Calu3 (cell line): ENCODE measurements at regions of chr7 and their contacts with region 1.

Region 1: GRCh38 chr7:7761340-7761980 is 43.1 kb upstream of the RPA3 start:
- DNase-seq: no peak
- H3K4me3 Mint-ChIP-seq: peak overlapping the region; percentile 66
- H3K27ac Mint-ChIP-seq: peak overlapping the region; percentile 5
- H3K4me1 Mint-ChIP-seq: peaks cover 39% of the 10 kb centered on the region
- H3K27me3 Mint-ChIP-seq: no peaks in the 10 kb centered on the region
- CTCF ChIP-seq: no peak

Region 2: GRCh38 chr7:7595451-7595850 is 166.0 kb before region 1 on chr7:
- CTCF ChIA-PET with region 1: no interaction called
- intact Hi-C with region 1: loop called (anchors 5 kb)
- DNase-seq: no peak
- H3K4me3 Mint-ChIP-seq: no peak overlapping the region
- H3K27ac Mint-ChIP-seq: no peak overlapping the region
- H3K4me1 Mint-ChIP-seq: no peaks in the 10 kb centered on the region
- H3K27me3 Mint-ChIP-seq: no peaks in the 10 kb centered on the region
- CTCF ChIP-seq: peak; percentile 46

Region 3: DNA sequence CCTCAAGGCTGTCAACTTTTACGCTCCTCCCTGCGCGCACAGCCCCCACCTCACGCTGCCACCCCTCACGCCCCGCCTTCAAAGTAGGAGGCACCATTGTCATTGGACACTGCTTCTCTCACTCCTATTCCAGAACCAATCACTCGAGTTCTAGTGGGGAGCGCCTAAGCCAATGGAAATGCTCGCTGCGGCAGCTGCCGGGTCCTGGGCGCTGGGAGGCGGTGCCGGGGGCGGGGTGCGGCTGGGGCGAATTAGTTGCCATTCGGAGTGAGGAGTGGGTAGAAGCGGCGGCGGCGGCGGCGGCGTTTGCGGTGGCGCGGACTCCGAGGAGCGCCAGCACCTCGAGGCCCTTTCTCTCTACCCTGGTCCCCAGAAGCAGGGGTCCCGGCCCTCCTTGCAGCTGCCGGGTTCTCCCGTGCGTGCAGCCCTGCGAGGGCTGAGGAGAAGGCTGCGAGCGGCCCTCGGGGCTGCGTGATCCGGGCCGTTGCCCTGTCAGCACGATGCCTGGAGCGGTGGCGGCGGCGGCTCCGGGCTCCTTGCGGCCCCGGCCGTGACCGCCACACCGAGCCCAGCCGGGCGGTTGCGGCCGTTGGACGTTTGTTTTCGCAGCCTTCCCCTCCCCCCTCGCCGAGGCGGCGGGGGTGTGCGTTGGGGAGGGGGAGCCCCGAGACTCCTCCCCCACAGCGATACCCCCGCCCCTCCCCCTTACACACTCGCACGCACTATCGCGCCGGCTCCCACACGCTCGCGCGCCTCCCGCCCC is 207.3 kb after region 1 on chr7 and contains the start of gene GLCCI1:
- CTCF ChIA-PET with region 1: interaction called, 4 read pairs
- intact Hi-C with region 1: loop called (anchors 1 kb)
- DNase-seq: peak; percentile 99
- H3K4me3 Mint-ChIP-seq: no peak within 1 kb of the TSS
- H3K27ac Mint-ChIP-seq: peak within 1 kb of the TSS; percentile 52
- H3K4me1 Mint-ChIP-seq: no peaks in the 10 kb centered on the region
- H3K27me3 Mint-ChIP-seq: no peaks in the 10 kb centered on the region
- CTCF ChIP-seq: no peak
- total RNA-seq, gene GLCCI1: 10.1 and 12.9 TPM in 2 replicates

Region 4: DNA sequence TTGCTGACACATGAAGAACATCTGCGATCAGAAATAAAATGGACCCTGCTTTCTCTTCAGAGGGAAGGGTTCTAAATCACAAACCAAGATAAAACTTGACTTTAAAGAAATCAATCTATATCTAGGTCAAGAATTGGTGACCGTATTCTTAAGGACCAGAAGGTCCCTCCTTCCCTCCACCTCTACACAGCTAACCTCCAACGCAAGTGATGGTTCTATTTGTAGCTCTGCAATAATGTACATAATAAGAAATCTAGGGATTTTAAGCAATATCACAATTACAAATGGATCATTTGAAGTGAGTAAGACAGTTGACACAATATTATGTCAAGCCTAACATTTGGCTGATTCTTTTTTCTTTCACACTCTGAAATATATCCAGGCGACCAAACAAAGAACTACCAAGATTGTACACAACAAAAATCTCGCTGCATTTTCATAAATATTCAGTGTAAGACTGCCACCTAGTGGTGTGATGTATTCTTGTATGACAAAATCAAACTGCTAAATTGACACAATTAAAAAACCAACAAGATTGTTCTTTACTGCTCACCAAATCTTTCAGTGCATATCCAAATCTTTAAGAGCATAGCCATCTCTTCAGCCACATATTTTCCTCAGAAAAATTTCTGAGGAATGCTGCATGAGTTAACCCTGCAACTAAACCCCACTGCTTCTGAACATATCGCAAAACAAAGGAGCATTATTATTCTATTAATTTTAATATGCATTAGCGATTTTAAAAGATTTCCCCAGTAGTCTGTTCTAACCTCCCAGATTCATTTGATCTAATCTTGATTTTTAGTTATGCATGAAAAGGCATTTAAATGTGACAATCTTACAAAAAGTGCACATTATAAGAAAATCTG is 456.0 kb after region 1 on chr7:
- CTCF ChIA-PET with region 1: no interaction called
- intact Hi-C with region 1: loop called (anchors 5 kb)
- DNase-seq: peak; percentile 59
- H3K4me3 Mint-ChIP-seq: no peak overlapping the region
- H3K27ac Mint-ChIP-seq: no peak overlapping the region
- H3K4me1 Mint-ChIP-seq: no peaks in the 10 kb centered on the region
- H3K27me3 Mint-ChIP-seq: no peaks in the 10 kb centered on the region
- CTCF ChIP-seq: peak; percentile 66